Right lobe of liver (tissue), 6 donors: ENCODE measurements at regions of chr11 and their contacts with region 1.

Region 1: DNA sequence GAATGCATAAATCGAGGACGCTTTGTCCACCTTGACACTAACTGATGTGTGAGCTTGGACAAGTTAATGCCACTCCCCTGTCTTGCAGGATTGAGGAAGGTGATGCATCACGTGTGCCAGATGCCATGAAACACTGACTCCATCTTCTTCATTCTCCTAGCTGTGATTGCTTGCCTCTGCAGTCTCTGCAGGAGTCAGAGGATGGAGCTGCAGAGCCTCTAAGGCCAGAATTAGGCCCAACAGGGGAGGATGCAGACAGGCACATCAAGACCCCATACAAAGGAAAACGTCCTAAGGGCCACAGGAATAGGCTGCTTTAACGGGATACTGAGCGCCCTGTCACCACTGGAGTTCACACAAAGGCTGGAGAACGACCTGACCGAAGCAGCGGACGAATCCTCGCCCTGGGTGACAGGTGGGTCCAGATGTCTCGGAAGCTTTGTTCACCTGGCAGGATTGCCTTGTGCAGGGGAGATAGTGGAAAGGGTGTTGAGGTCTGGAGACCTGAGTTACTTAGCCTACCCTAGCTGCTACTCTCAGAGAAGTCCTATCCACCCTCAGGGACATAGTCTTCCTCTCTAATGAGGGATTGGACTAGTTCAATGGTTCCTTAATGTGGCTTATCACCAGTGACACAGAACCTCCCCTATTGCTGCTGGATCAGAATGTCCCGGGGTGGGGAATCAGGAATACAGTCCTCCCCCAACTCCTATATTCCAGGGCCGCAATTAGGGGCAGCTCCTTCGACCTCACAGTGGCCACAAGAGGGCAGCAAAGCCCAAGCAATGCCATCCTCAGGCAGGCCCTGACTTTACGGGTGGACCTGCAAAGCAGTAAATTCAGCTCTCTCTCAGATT is 32.4 kb downstream of the DBX1 start:
- DNase-seq: peak; percentile 73 to 77 (median 76)
- ATAC-seq: peak; percentile 85 to 90 (median 88)
- H3K4me3 ChIP-seq: no peak overlapping the region
- H3K27ac ChIP-seq: no peak overlapping the region
- H3K4me1 ChIP-seq: peaks cover 0 to 5% (median 0%) of the 10 kb centered on the region in 4 donors
- H3K27me3 ChIP-seq: no peaks in the 10 kb centered on the region
- CTCF ChIP-seq: peak; percentile 76 to 87 (median 80)
- POLR2A ChIP-seq: no peak

Region 2: GRCh38 chr11:19951558-19952115 is 176.3 kb before region 1 on chr11:
- intact Hi-C with region 1: loop called in 1 of 2 experiments (anchors 10 kb)
- DNase-seq: no peak
- ATAC-seq: peak; percentile 52 to 63 (median 60)
- H3K4me3 ChIP-seq: no peak overlapping the region
- H3K27ac ChIP-seq: peak overlapping the region in 1 of 3 donors; percentile 41
- H3K4me1 ChIP-seq: peaks cover 0 to 27% (median 13%) of the 10 kb centered on the region in 4 donors
- H3K27me3 ChIP-seq: no peaks in the 10 kb centered on the region
- CTCF ChIP-seq: peak; percentile 59 to 86 (median 62)
- POLR2A ChIP-seq: no peak

Region 3: DNA sequence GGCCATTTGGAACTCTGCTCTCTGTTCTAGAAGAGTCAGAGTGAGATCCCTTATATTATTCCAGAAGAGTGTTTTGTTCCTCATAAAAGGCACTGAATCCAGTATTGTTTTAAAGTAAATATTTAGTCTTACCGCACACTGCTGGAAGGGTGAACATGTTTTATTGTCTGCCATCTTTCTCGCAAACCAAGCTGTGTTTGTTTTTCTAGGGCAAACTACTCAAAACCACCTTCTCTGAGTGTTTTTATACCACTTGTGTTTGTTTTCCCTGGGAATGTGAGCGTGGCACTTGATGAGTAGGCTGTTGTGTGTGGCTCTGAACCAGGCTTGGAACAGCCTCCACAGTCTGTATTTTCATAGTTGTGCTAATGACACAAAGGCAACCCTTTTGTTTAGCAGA is 57.4 kb before region 1 on chr11:
- intact Hi-C with region 1: no loop called
- DNase-seq: no peak
- ATAC-seq: peak in 3 of 4 donors; percentile 16 to 33 (median 28)
- H3K4me3 ChIP-seq: no peak overlapping the region
- H3K27ac ChIP-seq: no peak overlapping the region
- H3K4me1 ChIP-seq: no peaks in the 10 kb centered on the region
- H3K27me3 ChIP-seq: no peaks in the 10 kb centered on the region
- CTCF ChIP-seq: no peak
- POLR2A ChIP-seq: no peak

Region 4: GRCh38 chr11:20355221-20356219 is 227.6 kb after region 1 on chr11:
- intact Hi-C with region 1: loop called in 1 of 2 experiments (anchors 10 kb)
- DNase-seq: peak in 1 of 3 donors; percentile 53
- ATAC-seq: peak; percentile 71 to 91 (median 86)
- H3K4me3 ChIP-seq: peak overlapping the region in 1 of 3 donors; percentile 28
- H3K27ac ChIP-seq: peak overlapping the region; percentile 1 to 62 (median 47)
- H3K4me1 ChIP-seq: peaks cover 0 to 22% (median 0%) of the 10 kb centered on the region in 4 donors
- H3K27me3 ChIP-seq: no peaks in the 10 kb centered on the region
- CTCF ChIP-seq: peak; percentile 42 to 71 (median 58)
- POLR2A ChIP-seq: no peak

Region 5: GRCh38 chr11:20609727-20610707 is 482.1 kb after region 1 on chr11:
- intact Hi-C with region 1: loop called in 1 of 2 experiments (anchors 10 kb)
- DNase-seq: peak; percentile 78 to 81 (median 79)
- ATAC-seq: peak; percentile 97 to 100 (median 100)
- H3K4me3 ChIP-seq: no peak overlapping the region
- H3K27ac ChIP-seq: no peak overlapping the region
- H3K4me1 ChIP-seq: peaks cover 0 to 20% (median 0%) of the 10 kb centered on the region in 4 donors
- H3K27me3 ChIP-seq: peaks cover 0 to 14% of the 10 kb centered on the region in 2 donors
- CTCF ChIP-seq: peak; percentile 93 to 99 (median 96)
- POLR2A ChIP-seq: no peak